GM12878 (cell line): ENCODE measurements at regions of chr1 and their contacts with region 1.

Region 1: GRCh38 chr1:53754484-53755312 is 15.7 kb upstream of the GLIS1 start:
- DNase-seq: no peak
- ATAC-seq: peak; percentile 81
- H3K4me3 ChIP-seq: no peak overlapping the region
- H3K27ac ChIP-seq: no peak overlapping the region
- H3K4me1 ChIP-seq: no peaks in the 10 kb centered on the region
- H3K27me3 ChIP-seq: no peaks in the 10 kb centered on the region
- CTCF ChIP-seq: peak; percentile 66 to 69 (median 69)
- EP300 ChIP-seq: no peak
- POLR2A ChIP-seq: no peak
- RAD21 ChIP-seq: peak; percentile 63

Region 2: GRCh38 chr1:53485478-53486394 is 269.0 kb before region 1 on chr1:
- CTCF ChIA-PET with region 1: interaction called, 6 read pairs
- POLR2A ChIA-PET with region 1: no interaction called
- RAD21 ChIA-PET with region 1: interaction called, 3 read pairs
- SMC1A ChIA-PET with region 1: interaction called, 3 read pairs
- in situ Hi-C with region 1: loop called (anchors 5 kb)
- intact Hi-C with region 1: loop called (anchors 1 kb)
- DNase-seq: no peak
- ATAC-seq: peak; percentile 96
- H3K4me3 ChIP-seq: no peak overlapping the region
- H3K27ac ChIP-seq: no peak overlapping the region
- H3K4me1 ChIP-seq: no peaks in the 10 kb centered on the region
- H3K27me3 ChIP-seq: peaks cover 5 to 7% of the 10 kb centered on the region in 2 experiments; a peak in 3 of 4 replicates
- CTCF ChIP-seq: peak; percentile 81 to 89 (median 85)
- EP300 ChIP-seq: no peak
- POLR2A ChIP-seq: no peak
- RAD21 ChIP-seq: peak; percentile 79

Region 3: DNA sequence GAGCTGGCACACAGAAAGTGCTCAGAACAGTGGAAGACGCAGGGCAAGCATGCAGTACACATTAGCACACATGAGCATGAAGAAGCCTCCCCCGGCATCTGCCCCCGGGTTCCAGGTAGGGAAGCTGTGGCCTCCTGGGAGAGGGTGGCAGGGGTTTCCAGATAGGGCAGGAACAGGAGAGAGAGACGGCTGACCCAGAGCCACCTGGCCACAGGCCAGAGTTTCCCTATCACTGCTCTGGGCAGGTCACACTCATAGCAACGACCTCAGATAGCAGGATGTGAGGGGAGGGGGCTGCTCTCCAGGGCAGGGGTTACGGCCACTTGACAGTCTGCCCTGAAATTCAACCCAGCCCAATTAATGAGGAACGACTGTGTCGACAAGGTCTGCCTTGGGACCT is 52.4 kb before region 1 on chr1:
- CTCF ChIA-PET with region 1: no interaction called
- POLR2A ChIA-PET with region 1: no interaction called
- RAD21 ChIA-PET with region 1: no interaction called
- SMC1A ChIA-PET with region 1: no interaction called
- in situ Hi-C with region 1: no loop called
- intact Hi-C with region 1: no loop called
- DNase-seq: no peak
- ATAC-seq: no peak
- H3K4me3 ChIP-seq: no peak overlapping the region
- H3K27ac ChIP-seq: no peak overlapping the region
- H3K4me1 ChIP-seq: no peaks in the 10 kb centered on the region
- H3K27me3 ChIP-seq: peaks cover 2 to 8% of the 10 kb centered on the region in 2 experiments; a peak in 3 of 4 replicates
- CTCF ChIP-seq: no peak
- EP300 ChIP-seq: no peak
- POLR2A ChIP-seq: no peak
- RAD21 ChIP-seq: no peak

Region 4: GRCh38 chr1:53715478-53715877 is 39.2 kb before region 1 on chr1:
- CTCF ChIA-PET with region 1: interaction called, 4 read pairs
- POLR2A ChIA-PET with region 1: no interaction called
- RAD21 ChIA-PET with region 1: no interaction called
- SMC1A ChIA-PET with region 1: no interaction called
- in situ Hi-C with region 1: no loop called
- intact Hi-C with region 1: loop called (anchors 1 kb)
- DNase-seq: no peak
- ATAC-seq: peak; percentile 84
- H3K4me3 ChIP-seq: no peak overlapping the region
- H3K27ac ChIP-seq: no peak overlapping the region
- H3K4me1 ChIP-seq: no peaks in the 10 kb centered on the region
- H3K27me3 ChIP-seq: no peaks in the 10 kb centered on the region; a peak in 2 of 4 replicates
- CTCF ChIP-seq: peak; percentile 52 to 63 (median 53)
- EP300 ChIP-seq: no peak
- POLR2A ChIP-seq: no peak
- RAD21 ChIP-seq: peak; percentile 34

Region 5: GRCh38 chr1:53765657-53766056 is 11.0 kb after region 1 on chr1:
- CTCF ChIA-PET with region 1: interaction called, 11 read pairs
- POLR2A ChIA-PET with region 1: no interaction called
- RAD21 ChIA-PET with region 1: no interaction called
- SMC1A ChIA-PET with region 1: interaction called, 3 read pairs
- in situ Hi-C with region 1: no loop called
- intact Hi-C with region 1: no loop called
- DNase-seq: no peak
- ATAC-seq: peak; percentile 69
- H3K4me3 ChIP-seq: no peak overlapping the region
- H3K27ac ChIP-seq: no peak overlapping the region
- H3K4me1 ChIP-seq: peaks cover 3% of the 10 kb centered on the region; the same call in 1 of the 2 replicates
- H3K27me3 ChIP-seq: no peaks in the 10 kb centered on the region
- CTCF ChIP-seq: no peak
- EP300 ChIP-seq: no peak
- POLR2A ChIP-seq: no peak
- RAD21 ChIP-seq: no peak